ENCODE measurements at regions of chr19 and their contacts with region 1.

Region 1: GRCh38 chr19:49937750-49938381 is 8.6 kb upstream of the NUP62 start:
- DNase-seq: peak; percentile 91
- H3K4me3 ChIP-seq: peak overlapping the region; percentile 34 to 56
- H3K27ac ChIP-seq: no peak overlapping the region
- H3K4me1 ChIP-seq: peaks cover 0 to 3% of the 10 kb centered on the region in 2 experiments; a peak in 1 of 4 replicates
- H3K27me3 ChIP-seq: no peaks in the 10 kb centered on the region; the same call in 1 of the 2 replicates
- CTCF ChIP-seq: peak; percentile 96
- EP300 ChIP-seq: no peak
- RAD21 ChIP-seq: peak; percentile 95

Region 2: GRCh38 chr19:49954079-49954829 is 16.4 kb after region 1 on chr19:
- CTCF ChIA-PET with region 1: interaction called, 48 read pairs
- POLR2A ChIA-PET with region 1: no interaction called
- DNase-seq: no peak
- H3K4me3 ChIP-seq: no peak overlapping the region
- H3K27ac ChIP-seq: no peak overlapping the region
- H3K4me1 ChIP-seq: no peaks in the 10 kb centered on the region
- H3K27me3 ChIP-seq: peaks cover 67% of the 10 kb centered on the region
- CTCF ChIP-seq: no peak
- EP300 ChIP-seq: no peak
- RAD21 ChIP-seq: no peak

Region 3: GRCh38 chr19:50003810-50004419 is 66.0 kb after region 1 on chr19:
- CTCF ChIA-PET with region 1: interaction called, 11 read pairs
- POLR2A ChIA-PET with region 1: no interaction called
- DNase-seq: no peak
- H3K4me3 ChIP-seq: 0 out of 4 replicates have a peak overlapping the region, but pooled peaks of 1 of the 2 experiments have one; percentile 10
- H3K27ac ChIP-seq: peak overlapping the region; percentile 12 to 93; a peak in 3 of 4 replicates
- H3K4me1 ChIP-seq: peaks cover 0 to 9% of the 10 kb centered on the region in 2 experiments; a peak in 2 of 4 replicates
- H3K27me3 ChIP-seq: no peaks in the 10 kb centered on the region
- CTCF ChIP-seq: no peak
- EP300 ChIP-seq: peak in 1 of 2 experiments; percentile 29; a peak in 1 of 4 replicates
- RAD21 ChIP-seq: no peak

Measured in SK-N-SH (cell line).